ENCODE measurements at regions of chr7 and their contacts with region 1.

Region 1: GRCh38 chr7:132318352-132319318 is 257.6 kb downstream of the PLXNA4 start:
- DNase-seq: peak; percentile 81 to 92 (median 87)
- H3K4me3 ChIP-seq: peak overlapping the region in 21 of 59 donors; percentile 1 to 56 (median 20)
- H3K27ac ChIP-seq: peak overlapping the region in 2 of 59 donors; percentile 3 to 8
- H3K27me3 ChIP-seq: peaks cover 0 to 19% (median 2%) of the 10 kb centered on the region in 45 donors
- CTCF ChIP-seq: peak; percentile 85 to 98 (median 93)

Region 2: GRCh38 chr7:132368246-132368900 is 49.7 kb after region 1 on chr7:
- intact Hi-C with region 1: no loop called
- DNase-seq: peak in 1 of 10 donors; percentile 32
- H3K4me3 ChIP-seq: no peak overlapping the region
- H3K27ac ChIP-seq: no peak overlapping the region
- H3K27me3 ChIP-seq: peaks cover 0 to 9% (median 0%) of the 10 kb centered on the region in 45 donors
- CTCF ChIP-seq: no peak

Region 3: DNA sequence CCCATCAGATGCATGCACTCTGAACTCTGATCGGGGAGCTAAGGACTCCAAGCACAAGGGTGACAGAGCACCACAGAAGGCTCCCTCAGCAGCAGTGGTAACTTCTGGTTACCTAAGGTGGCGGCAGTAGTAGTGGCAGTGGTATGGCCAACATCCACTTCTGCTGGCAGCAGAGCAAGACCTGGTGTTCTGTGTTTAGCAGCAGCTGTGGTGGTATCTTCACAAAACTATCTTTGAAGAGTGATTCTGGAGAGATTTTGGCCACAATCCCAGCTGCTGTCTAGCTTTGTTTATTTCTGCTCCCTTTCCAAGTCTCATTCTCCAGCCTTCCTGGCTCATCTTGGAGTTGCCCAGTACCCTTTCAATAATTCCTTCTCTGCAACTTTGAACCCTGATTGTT is 1706.1 kb after region 1 on chr7:
- intact Hi-C with region 1: loop called in 1 of 2 experiments (anchors 10 kb)
- DNase-seq: no peak
- H3K4me3 ChIP-seq: no peak overlapping the region
- H3K27ac ChIP-seq: no peak overlapping the region
- H3K27me3 ChIP-seq: no peaks in the 10 kb centered on the region
- CTCF ChIP-seq: no peak

Measured in dorsolateral prefrontal cortex (tissue), 120 donors.